Activated B cell treated with CpG ODN at 0.5 μM for 24 hours (primary cell): ENCODE measurements at regions of chr3 and their contacts with region 1.

Region 1: GRCh38 chr3:136752422-136753325 is 496 bp upstream of the STAG1 start:
- DNase-seq: peak; percentile 99
- ATAC-seq: peak; percentile 85
- H3K4me3 Mint-ChIP-seq: peak overlapping the region; percentile 93
- H3K27ac Mint-ChIP-seq: peak overlapping the region; percentile 92
- H3K4me1 Mint-ChIP-seq: peaks cover 42% of the 10 kb centered on the region
- H3K27me3 Mint-ChIP-seq: no peaks in the 10 kb centered on the region
- CTCF ChIP-seq: peak; percentile 66

Region 2: DNA sequence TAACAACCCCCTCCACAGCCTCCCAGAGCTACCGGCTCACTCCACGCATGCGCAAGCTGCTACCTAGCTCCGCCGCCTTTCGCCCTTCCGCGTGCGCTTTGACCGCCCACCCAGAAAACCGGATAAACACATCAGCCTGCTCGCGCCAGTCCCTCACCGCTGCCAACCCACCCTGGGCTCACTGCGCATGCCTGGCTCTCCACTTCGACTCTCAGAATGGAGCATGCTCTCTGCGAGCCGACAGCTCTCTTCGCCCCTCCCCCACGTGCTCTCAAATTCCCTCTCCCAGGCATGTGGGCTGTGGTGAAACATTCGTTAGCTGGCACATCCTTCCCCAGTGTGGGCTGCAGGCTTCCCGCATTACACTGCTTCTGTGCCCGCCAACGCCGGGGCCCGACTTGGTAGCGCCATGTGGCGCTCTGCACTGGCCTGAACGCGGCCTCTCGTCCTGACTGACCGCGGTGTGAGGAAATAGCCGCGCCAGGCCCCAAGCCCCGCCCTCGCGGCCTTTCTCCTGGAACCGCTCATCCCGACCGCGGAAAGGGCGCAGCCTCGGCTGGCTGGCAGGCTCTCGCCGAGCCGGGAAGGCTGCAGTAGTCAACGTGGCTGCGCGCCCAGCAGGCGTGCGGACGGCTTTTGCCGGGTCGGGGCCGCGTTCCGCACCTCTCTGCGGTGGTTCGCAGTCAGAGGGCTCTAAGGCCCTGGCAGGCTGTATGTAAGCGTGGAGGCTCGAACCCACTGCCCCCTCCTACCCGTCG is 556.1 kb before region 1 on chr3:
- CTCF ChIA-PET with region 1: interaction called, 17 read pairs
- POLR2A ChIA-PET with region 1: interaction called, 135 read pairs
- intact Hi-C with region 1: loop called (anchors 1 kb)
- DNase-seq: peak; percentile 95
- ATAC-seq: peak; percentile 75
- H3K4me3 Mint-ChIP-seq: peak overlapping the region; percentile 99
- H3K27ac Mint-ChIP-seq: peak overlapping the region; percentile 94
- H3K4me1 Mint-ChIP-seq: peaks cover 47% of the 10 kb centered on the region
- H3K27me3 Mint-ChIP-seq: no peaks in the 10 kb centered on the region
- CTCF ChIP-seq: no peak

Region 3: DNA sequence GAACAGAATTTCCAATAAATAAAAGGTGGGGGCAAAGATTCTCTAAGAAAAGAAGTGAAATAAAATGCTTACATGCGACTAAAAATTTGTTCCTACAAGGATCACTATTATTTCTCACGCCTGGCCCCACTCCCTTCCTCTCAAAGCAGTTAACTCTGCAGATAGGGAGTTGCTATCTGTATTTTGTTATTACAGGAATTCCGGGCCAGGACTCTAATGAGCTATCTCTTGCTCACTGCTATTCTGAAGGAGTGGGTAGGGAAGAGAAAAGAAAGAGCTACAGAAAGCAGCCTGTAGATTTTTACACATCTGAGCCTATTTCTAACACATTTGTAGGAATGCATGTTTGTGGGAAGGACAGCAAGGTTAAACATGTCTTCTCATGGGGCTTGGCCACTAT is 362.1 kb before region 1 on chr3:
- CTCF ChIA-PET with region 1: interaction called, 53 read pairs
- POLR2A ChIA-PET with region 1: interaction called, 23 read pairs
- intact Hi-C with region 1: loop called (anchors 1 kb)
- DNase-seq: no peak
- ATAC-seq: no peak
- H3K4me3 Mint-ChIP-seq: no peak overlapping the region
- H3K27ac Mint-ChIP-seq: no peak overlapping the region
- H3K4me1 Mint-ChIP-seq: peaks cover 3% of the 10 kb centered on the region
- H3K27me3 Mint-ChIP-seq: no peaks in the 10 kb centered on the region
- CTCF ChIP-seq: no peak

Region 4: DNA sequence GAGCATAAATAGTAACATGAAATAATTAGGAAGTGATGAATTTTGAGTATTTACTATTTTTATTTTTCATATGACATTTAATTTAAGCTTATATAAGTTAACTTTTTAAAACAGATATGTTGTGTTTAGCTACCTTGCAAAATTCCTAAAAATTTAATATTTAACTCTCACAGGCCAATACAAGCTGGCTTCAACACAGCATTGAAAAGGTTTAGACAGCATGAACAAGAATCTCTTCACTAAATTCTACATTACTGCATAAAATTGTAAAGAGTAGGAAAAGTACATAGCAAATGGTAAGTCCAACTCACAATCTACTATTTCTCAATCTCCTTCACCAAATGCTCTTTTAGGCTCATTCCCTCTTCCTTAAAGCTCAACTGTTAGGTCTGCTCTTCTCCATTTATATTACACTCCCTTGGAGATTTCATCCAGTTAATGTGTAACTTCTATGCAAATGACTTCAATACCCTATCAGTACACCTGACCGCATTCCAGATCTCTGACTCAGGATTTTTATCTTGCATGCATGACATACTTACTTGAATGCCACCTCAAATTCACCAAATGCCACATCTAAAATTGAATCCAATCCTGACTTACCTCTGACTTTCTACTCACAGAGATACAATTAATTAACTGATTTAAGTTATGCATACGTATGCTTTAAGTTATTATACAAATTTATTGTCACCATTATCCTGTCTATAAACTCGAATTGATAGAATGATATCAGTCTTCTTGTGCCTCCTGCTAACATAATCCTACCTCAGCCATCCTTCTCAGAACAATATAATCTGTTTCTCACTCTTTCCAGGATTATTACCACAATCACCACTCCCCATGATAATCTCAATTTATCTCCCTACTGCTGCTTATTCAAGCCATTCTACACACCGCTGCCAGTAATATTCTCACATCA is 127.5 kb before region 1 on chr3:
- CTCF ChIA-PET with region 1: interaction called, 3 read pairs
- POLR2A ChIA-PET with region 1: no interaction called
- intact Hi-C with region 1: loop called (anchors 5 kb)
- DNase-seq: no peak
- ATAC-seq: peak; percentile 49
- H3K4me3 Mint-ChIP-seq: no peak overlapping the region
- H3K27ac Mint-ChIP-seq: no peak overlapping the region
- H3K4me1 Mint-ChIP-seq: peaks cover 38% of the 10 kb centered on the region
- H3K27me3 Mint-ChIP-seq: no peaks in the 10 kb centered on the region
- CTCF ChIP-seq: no peak

Region 5: GRCh38 chr3:136861890-136862616 is 109.4 kb after region 1 on chr3 and contains the start of gene NCK1:
- CTCF ChIA-PET with region 1: interaction called, 31 read pairs
- POLR2A ChIA-PET with region 1: interaction called, 128 read pairs
- intact Hi-C with region 1: loop called (anchors 1 kb)
- DNase-seq: peak; percentile 92
- ATAC-seq: peak; percentile 94
- H3K4me3 Mint-ChIP-seq: peak within 1 kb of the TSS; percentile 93
- H3K27ac Mint-ChIP-seq: peak within 1 kb of the TSS; percentile 95
- H3K4me1 Mint-ChIP-seq: peaks cover 43% of the 10 kb centered on the region
- H3K27me3 Mint-ChIP-seq: no peaks in the 10 kb centered on the region
- CTCF ChIP-seq: no peak
- total RNA-seq, gene NCK1: 29.7 and 30.8 TPM in 2 replicates

Region 6: DNA sequence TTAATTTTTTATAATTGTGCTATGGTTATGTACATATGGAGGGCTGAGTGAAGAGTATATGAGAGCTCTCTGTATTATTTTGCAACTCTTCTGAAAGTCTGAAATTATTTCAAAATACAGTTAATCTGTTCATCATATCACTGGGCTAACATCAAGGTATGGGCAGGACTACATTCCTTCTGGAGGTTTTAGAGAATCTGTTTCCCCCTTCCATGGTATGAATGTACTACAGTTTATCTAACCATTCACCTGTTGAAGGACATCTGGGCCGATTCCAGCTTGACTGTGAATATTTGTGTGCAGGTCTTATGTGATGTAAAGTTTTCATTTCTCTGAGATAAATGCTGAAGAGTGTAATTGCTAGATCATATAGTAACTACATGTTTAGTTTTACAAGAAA is 210.3 kb after region 1 on chr3:
- CTCF ChIA-PET with region 1: no interaction called
- POLR2A ChIA-PET with region 1: no interaction called
- intact Hi-C with region 1: no loop called
- DNase-seq: no peak
- ATAC-seq: no peak
- H3K4me3 Mint-ChIP-seq: no peak overlapping the region
- H3K27ac Mint-ChIP-seq: no peak overlapping the region
- H3K4me1 Mint-ChIP-seq: no peaks in the 10 kb centered on the region
- H3K27me3 Mint-ChIP-seq: no peaks in the 10 kb centered on the region
- CTCF ChIP-seq: no peak

Region 7: DNA sequence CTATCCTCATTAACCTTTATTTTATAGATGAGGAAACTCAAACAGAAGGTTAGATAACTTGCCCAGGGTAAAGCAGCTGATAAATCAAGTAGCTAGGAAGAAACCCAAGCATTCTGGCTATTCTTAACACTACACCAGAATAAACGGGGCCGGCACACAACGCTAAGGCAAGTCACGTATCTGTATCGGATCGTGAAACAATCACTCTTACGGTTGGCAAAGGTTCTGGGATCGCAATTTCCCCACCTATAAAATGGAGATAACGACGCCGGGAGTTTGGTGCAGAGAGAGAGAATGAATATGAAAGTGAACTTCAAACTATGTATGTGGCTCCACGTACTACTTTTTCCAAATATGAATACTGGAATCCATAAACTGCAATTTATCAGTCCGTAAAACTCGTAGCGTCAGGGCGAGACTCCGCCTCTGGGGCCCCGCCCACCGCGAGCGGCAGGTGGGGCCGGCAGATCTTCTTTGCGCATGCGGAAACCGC is 1434.2 kb after region 1 on chr3:
- CTCF ChIA-PET with region 1: no interaction called
- POLR2A ChIA-PET with region 1: interaction called, 4 read pairs
- intact Hi-C with region 1: loop called (anchors 2 kb)
- DNase-seq: no peak
- ATAC-seq: peak; percentile 94
- H3K4me3 Mint-ChIP-seq: peak overlapping the region; percentile 92
- H3K27ac Mint-ChIP-seq: peak overlapping the region; percentile 99
- H3K4me1 Mint-ChIP-seq: peaks cover 37% of the 10 kb centered on the region
- H3K27me3 Mint-ChIP-seq: peaks cover 5% of the 10 kb centered on the region
- CTCF ChIP-seq: no peak